A549 (cell line): ENCODE measurements at regions of chr15 and their contacts with region 1.

Region 1: DNA sequence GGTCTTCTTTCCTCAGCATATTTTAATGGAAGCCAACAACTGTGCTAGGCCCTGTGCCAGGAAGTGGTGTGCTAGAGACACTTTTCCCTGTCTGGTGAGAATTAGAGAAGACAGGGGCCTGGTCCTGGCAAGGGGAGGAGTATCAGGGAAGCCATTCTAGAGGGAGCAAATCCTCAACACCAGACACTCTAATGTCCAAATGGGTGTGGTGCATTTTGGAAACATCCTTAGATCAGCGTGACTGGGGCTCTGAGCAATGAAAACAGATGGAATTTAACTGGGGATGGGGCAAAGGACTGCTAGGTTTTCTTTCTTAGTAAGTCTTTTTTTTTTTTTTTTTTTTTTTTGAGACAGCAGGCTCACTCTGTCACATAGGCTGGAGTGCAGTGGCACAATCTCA is 7.7 kb upstream of the VPS18 start:
- DNase-seq: no peak
- ATAC-seq: no peak
- H3K4me3 ChIP-seq: no peak overlapping the region
- H3K27ac ChIP-seq: no peak overlapping the region
- H3K4me1 ChIP-seq: no peaks in the 10 kb centered on the region
- CTCF ChIP-seq: no peak
- EP300 ChIP-seq: no peak
- POLR2A ChIP-seq: no peak
- RAD21 ChIP-seq: no peak

Region 2: DNA sequence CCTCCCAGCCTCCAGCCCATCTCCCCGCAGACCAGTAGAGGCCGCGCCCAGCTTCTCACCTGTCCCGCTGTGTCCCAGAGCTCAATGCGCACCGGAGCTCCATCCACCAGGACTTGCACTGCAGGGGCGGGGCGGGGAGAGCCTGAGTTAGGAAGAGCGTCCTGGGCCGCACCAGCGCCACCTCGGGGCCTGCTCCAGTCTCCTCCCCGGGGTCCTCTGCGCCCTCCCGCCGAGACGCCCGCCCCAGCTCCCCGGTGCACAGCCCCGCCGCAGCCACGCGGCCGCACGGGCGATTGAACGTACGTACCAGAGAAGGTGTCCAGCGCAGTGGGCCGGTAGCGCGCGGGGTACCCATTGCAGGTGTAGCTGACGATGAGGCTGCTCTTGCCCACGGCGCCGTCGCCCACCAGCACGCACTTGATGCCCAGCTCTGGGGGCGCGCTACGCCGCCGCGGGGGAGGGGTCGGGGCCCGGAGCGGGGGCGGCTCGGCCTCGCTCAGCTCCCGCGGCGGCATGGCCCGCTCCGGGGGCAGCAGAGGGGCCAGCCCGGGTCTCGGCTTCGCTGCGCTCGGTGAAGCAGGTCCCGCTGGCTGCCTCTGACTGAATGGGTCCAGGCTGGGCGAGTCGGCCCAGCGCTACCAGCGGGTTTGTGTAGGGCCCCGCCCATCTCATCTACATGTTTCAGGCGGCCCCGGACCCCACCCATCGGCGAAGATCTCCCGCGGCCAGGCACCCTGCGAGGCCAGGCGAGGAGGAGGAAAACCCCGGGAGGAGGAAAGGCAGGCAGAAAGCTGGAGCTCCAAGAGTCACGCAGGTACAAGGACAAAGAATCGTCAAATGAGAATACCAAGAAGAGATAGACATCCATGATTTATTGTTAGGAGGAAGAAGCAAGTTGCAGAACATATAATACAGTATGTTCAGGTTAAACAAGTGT is 12.7 kb before region 1 on chr15 and contains the start of gene RHOV:
- CTCF ChIA-PET with region 1: interaction called, 30 read pairs
- POLR2A ChIA-PET with region 1: interaction called, 5 read pairs
- DNase-seq: peak; percentile 76 to 83
- ATAC-seq: peak; percentile 95 to 96
- H3K4me3 ChIP-seq: peak within 1 kb of the TSS; percentile 92
- H3K27ac ChIP-seq: peak within 1 kb of the TSS; percentile 93 to 99
- H3K4me1 ChIP-seq: peaks cover 18% of the 10 kb centered on the region
- CTCF ChIP-seq: peak; percentile 40
- EP300 ChIP-seq: no peak
- POLR2A ChIP-seq: peak; percentile 57
- RAD21 ChIP-seq: peak; percentile 26 to 36; a peak in 3 of 5 replicates
- polyA plus RNA-seq, gene RHOV: 13.0 and 13.9 TPM in 2 replicates